ENCODE measurements at regions of chr16 and their contacts with region 1.

Region 1: GRCh38 chr16:13919683-13920509 is at the start of gene ERCC4:
- H3K4me3 ChIP-seq: peak within 1 kb of the TSS; percentile 75
- H3K27ac ChIP-seq: peak within 1 kb of the TSS; percentile 42; the same call in 1 of the 2 replicates
- H3K4me1 ChIP-seq: peaks cover 4% of the 10 kb centered on the region
- CTCF ChIP-seq: peak; percentile 92

Region 2: DNA sequence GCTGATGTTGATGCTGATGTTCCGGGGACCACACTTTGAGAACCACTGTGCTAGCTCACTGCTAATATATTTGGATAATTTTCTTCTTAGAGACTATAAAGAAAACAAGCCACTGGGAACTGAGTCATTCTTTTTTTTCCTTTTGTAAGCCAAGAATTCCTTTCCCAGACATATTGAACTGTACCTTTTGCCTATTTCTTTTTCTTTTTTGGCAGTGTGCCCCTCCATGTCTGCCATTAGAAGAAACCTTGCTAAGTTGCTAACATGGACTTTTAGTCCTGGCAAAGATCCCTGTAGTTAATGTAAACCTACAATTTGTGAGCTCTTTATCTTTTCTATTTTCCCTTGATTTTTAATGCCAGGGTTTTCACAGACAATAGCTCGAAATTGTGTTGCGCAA is 17.2 kb before region 1 on chr16:
- CTCF ChIA-PET with region 1: interaction called, 33 read pairs
- POLR2A ChIA-PET with region 1: no interaction called
- H3K4me3 ChIP-seq: no peak overlapping the region
- H3K27ac ChIP-seq: no peak overlapping the region
- H3K4me1 ChIP-seq: no peaks in the 10 kb centered on the region
- CTCF ChIP-seq: no peak

Region 3: GRCh38 chr16:13935408-13935807 is 15.5 kb after region 1 on chr16:
- CTCF ChIA-PET with region 1: interaction called, 36 read pairs
- POLR2A ChIA-PET with region 1: interaction called, 5 read pairs
- H3K4me3 ChIP-seq: no peak overlapping the region
- H3K27ac ChIP-seq: no peak overlapping the region
- H3K4me1 ChIP-seq: no peaks in the 10 kb centered on the region
- CTCF ChIP-seq: no peak

Region 4: DNA sequence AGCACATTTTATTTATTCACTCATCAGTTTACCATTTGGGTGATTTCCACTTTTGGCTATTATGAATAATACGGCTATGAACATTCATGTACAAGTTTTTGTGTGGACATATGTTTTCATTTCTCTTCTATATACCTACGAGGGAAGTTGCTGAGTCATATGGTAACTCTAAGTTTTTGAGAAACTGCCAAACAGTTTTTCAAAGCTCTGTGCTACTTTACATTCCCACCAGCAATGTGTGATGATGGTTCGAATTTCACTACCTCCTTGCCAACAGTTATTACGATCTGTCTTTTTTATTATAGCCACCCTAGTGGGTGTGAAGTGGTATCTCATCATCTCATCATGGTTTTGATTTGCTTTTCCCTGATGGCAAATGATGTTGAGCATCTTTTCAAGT is 87.6 kb after region 1 on chr16:
- CTCF ChIA-PET with region 1: interaction called, 11 read pairs
- POLR2A ChIA-PET with region 1: interaction called, 6 read pairs
- H3K4me3 ChIP-seq: no peak overlapping the region
- H3K27ac ChIP-seq: no peak overlapping the region
- H3K4me1 ChIP-seq: peaks cover 2% of the 10 kb centered on the region
- CTCF ChIP-seq: no peak

Region 5: DNA sequence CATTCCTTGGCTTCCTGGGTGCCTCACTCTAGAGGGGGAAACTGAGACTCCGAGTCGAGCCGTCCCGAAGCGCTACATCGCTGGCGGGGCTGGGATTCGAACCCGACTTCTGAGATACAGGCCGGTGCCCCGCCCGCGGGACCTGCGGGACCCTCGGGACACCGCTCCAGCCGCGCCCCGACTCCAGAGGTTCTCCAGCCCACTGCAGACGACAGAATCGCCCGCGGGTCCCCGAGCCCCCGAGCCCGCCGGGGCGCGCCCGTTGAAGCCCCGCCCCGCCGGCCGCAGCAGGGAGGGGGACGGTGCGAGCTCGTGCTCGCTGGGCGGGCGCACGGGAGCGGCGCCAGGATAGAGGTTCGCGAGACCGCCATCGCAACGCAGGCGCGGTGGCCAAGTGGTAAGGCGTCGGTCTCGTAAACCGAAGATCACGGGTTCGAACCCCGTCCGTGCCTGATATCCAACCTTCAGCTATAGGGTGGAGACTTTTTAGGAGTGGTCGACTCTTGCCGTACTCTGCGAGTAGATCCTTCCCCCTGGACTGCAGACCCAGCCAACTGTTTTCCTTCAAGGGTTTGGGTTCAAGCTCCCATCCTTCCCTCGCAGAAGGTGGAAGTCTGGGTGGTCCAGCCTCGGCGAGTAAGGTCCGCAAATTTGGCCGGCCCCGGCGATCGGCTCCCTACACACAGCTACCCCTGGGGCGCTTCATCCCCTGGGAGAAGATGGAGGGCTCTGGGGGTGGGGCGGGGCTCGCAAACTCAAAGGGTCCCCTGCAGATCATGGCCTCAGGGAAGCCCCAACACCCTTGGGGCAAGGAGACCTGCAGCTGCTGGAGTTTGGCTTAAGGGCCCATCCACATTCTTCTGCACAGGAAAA is 365.9 kb after region 1 on chr16:
- CTCF ChIA-PET with region 1: interaction called, 12 read pairs
- POLR2A ChIA-PET with region 1: interaction called, 11 read pairs
- H3K4me3 ChIP-seq: peak overlapping the region; percentile 79
- H3K27ac ChIP-seq: peak overlapping the region; percentile 48
- H3K4me1 ChIP-seq: no peaks in the 10 kb centered on the region; the same call in 1 of the 2 replicates
- CTCF ChIP-seq: no peak

Measured in HEK293 (cell line).